CD8-positive, alpha-beta T cell (primary cell): ENCODE measurements at regions of chr3 and their contacts with region 1.

Region 1: GRCh38 chr3:158727206-158728060 is 4.8 kb downstream of the RARRES1 start:
- DNase-seq: peak in 8 of 9 experiments; percentile 15 to 73 (median 44)
- ATAC-seq: peak; percentile 78
- H3K4me3 ChIP-seq: peak overlapping the region in 1 of 2 experiments; percentile 11
- H3K4me3 Mint-ChIP-seq: peak overlapping the region; percentile 52
- H3K27ac ChIP-seq: no peak overlapping the region
- H3K27ac Mint-ChIP-seq: peak overlapping the region; percentile 14
- H3K4me1 ChIP-seq: peaks cover 22% of the 10 kb centered on the region
- H3K4me1 Mint-ChIP-seq: peaks cover 32% of the 10 kb centered on the region
- H3K27me3 ChIP-seq: peaks cover 0 to 4% of the 10 kb centered on the region in 2 experiments
- H3K27me3 Mint-ChIP-seq: peaks cover 7% of the 10 kb centered on the region
- CTCF ChIP-seq: peak; percentile 67

Region 2: GRCh38 chr3:158560979-158561378 is 166.5 kb before region 1 on chr3:
- CTCF ChIA-PET with region 1: no interaction called
- POLR2A ChIA-PET with region 1: no interaction called
- intact Hi-C with region 1: no loop called
- DNase-seq: no peak
- ATAC-seq: no peak
- H3K4me3 ChIP-seq: no peak overlapping the region
- H3K4me3 Mint-ChIP-seq: no peak overlapping the region
- H3K27ac ChIP-seq: no peak overlapping the region
- H3K27ac Mint-ChIP-seq: no peak overlapping the region
- H3K4me1 ChIP-seq: no peaks in the 10 kb centered on the region
- H3K4me1 Mint-ChIP-seq: no peaks in the 10 kb centered on the region
- H3K27me3 ChIP-seq: no peaks in the 10 kb centered on the region
- H3K27me3 Mint-ChIP-seq: peaks cover 32% of the 10 kb centered on the region
- CTCF ChIP-seq: no peak

Region 3: DNA sequence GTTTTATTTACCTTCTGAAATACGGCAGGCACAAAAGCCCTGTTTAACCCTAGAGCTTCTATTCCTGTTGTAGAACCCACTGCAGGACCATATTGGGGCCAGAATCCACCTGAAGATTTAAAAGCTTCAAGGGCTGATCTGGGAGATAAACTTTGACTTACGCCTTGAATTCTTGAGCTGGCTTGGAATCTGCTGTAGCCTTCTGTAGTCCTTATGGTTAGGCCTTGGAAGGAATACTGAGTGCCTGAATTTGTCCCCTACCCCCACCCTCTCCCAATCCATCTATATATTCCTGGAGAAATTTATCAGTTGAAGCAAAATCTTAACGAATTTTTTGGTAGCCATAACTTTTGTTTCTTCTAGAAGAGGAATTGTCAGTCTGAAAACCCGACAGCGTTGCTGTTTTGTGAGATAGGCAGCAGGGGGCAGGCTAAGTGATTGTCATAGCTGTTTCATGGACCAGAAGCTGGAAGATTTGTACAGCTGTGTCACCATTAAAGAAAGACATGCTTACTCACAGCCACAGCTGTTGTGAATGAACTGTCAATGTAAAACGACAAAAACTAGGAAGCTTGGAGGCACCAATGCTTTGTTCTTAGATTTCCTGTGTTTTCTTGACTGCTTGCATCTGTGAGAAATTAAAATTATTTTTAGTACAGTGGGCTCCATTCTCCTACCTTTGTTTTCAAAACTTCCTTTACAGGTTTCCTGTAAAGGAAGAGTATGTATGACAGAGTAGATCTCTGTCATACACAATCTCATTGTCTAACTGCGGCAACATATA is 67.8 kb before region 1 on chr3:
- CTCF ChIA-PET with region 1: interaction called, 14 read pairs
- POLR2A ChIA-PET with region 1: no interaction called
- intact Hi-C with region 1: no loop called
- DNase-seq: peak in 6 of 9 experiments; percentile 16 to 60 (median 50)
- ATAC-seq: peak; percentile 83
- H3K4me3 ChIP-seq: no peak overlapping the region
- H3K4me3 Mint-ChIP-seq: no peak overlapping the region
- H3K27ac ChIP-seq: no peak overlapping the region
- H3K27ac Mint-ChIP-seq: no peak overlapping the region
- H3K4me1 ChIP-seq: no peaks in the 10 kb centered on the region
- H3K4me1 Mint-ChIP-seq: peaks cover 5% of the 10 kb centered on the region
- H3K27me3 ChIP-seq: no peaks in the 10 kb centered on the region
- H3K27me3 Mint-ChIP-seq: no peaks in the 10 kb centered on the region
- CTCF ChIP-seq: peak; percentile 52

Region 4: DNA sequence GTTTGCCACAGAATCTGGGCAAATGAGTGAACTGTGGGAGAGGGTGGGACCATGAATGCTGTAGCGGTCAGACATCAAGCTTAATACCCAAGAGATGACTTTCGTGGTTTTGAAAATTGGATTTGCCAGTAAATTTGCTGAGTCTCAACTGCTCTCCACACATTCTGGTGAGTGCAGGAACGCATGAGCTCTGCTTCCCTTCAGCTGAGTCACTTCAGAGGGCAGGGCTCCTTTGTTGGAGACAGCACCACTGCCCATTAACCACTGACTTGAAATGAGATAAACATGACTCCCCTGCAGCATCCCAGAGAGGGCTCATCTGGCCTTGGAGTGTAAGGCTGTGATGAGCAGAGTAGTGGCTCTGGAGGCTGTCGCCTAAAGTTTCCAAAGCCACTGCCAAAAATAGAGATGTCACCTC is 17.8 kb before region 1 on chr3:
- CTCF ChIA-PET with region 1: interaction called, 12 read pairs
- POLR2A ChIA-PET with region 1: interaction called, 3 read pairs
- intact Hi-C with region 1: no loop called
- DNase-seq: no peak
- ATAC-seq: no peak
- H3K4me3 ChIP-seq: no peak overlapping the region
- H3K4me3 Mint-ChIP-seq: no peak overlapping the region
- H3K27ac ChIP-seq: no peak overlapping the region
- H3K27ac Mint-ChIP-seq: no peak overlapping the region
- H3K4me1 ChIP-seq: no peaks in the 10 kb centered on the region
- H3K4me1 Mint-ChIP-seq: no peaks in the 10 kb centered on the region
- H3K27me3 ChIP-seq: no peaks in the 10 kb centered on the region
- H3K27me3 Mint-ChIP-seq: no peaks in the 10 kb centered on the region
- CTCF ChIP-seq: no peak

Region 5: GRCh38 chr3:158742871-158743663 is 15.6 kb after region 1 on chr3:
- CTCF ChIA-PET with region 1: interaction called, 41 read pairs
- POLR2A ChIA-PET with region 1: no interaction called
- intact Hi-C with region 1: no loop called
- DNase-seq: no peak
- ATAC-seq: no peak
- H3K4me3 ChIP-seq: no peak overlapping the region
- H3K4me3 Mint-ChIP-seq: no peak overlapping the region
- H3K27ac ChIP-seq: no peak overlapping the region
- H3K27ac Mint-ChIP-seq: no peak overlapping the region
- H3K4me1 ChIP-seq: peaks cover 6% of the 10 kb centered on the region
- H3K4me1 Mint-ChIP-seq: peaks cover 11% of the 10 kb centered on the region
- H3K27me3 ChIP-seq: no peaks in the 10 kb centered on the region
- H3K27me3 Mint-ChIP-seq: no peaks in the 10 kb centered on the region
- CTCF ChIP-seq: no peak

Region 6: DNA sequence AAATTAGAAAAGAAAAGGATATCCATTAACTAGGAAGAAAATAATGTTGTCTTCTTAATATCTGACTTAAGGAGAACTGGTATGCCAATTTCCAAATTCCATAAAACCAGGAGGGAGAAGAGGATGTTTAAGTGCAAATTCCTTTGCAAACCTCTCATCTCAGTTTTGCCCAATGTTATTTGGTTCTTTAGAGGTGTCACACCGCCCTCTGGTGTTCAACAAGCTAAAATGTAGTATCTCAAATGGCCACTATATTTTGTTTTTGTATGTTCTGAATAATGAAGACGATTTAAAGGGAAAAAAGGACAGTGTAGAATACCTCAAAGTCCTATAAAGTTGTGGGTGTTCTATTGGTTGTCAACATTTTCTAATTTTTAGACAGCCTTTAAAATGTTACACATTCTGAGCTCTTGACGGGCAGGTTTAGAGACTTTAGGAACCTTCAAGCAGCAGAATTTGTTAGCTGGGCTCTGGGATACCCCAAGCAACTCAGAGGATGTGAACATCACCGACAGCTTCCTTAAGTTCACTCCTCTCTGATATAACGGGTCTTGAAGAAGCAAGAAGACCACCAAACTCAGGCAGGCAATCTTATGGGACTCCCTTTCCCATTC is 532.7 kb after region 1 on chr3:
- CTCF ChIA-PET with region 1: interaction called, 3 read pairs
- POLR2A ChIA-PET with region 1: no interaction called
- intact Hi-C with region 1: loop called in 1 of 2 experiments (anchors 5 kb)
- DNase-seq: peak in 4 of 9 experiments; percentile 9 to 56 (median 26)
- ATAC-seq: no peak
- H3K4me3 ChIP-seq: no peak overlapping the region
- H3K4me3 Mint-ChIP-seq: no peak overlapping the region
- H3K27ac ChIP-seq: no peak overlapping the region
- H3K27ac Mint-ChIP-seq: no peak overlapping the region
- H3K4me1 ChIP-seq: no peaks in the 10 kb centered on the region
- H3K4me1 Mint-ChIP-seq: no peaks in the 10 kb centered on the region
- H3K27me3 ChIP-seq: no peaks in the 10 kb centered on the region
- H3K27me3 Mint-ChIP-seq: peaks cover 7% of the 10 kb centered on the region
- CTCF ChIP-seq: peak; percentile 59

Region 7: GRCh38 chr3:159872374-159873109 is 1145.1 kb after region 1 on chr3:
- CTCF ChIA-PET with region 1: no interaction called
- POLR2A ChIA-PET with region 1: no interaction called
- intact Hi-C with region 1: no loop called
- DNase-seq: no peak
- ATAC-seq: no peak
- H3K4me3 ChIP-seq: no peak overlapping the region
- H3K4me3 Mint-ChIP-seq: no peak overlapping the region
- H3K27ac ChIP-seq: no peak overlapping the region
- H3K27ac Mint-ChIP-seq: no peak overlapping the region
- H3K4me1 ChIP-seq: no peaks in the 10 kb centered on the region
- H3K4me1 Mint-ChIP-seq: no peaks in the 10 kb centered on the region
- H3K27me3 ChIP-seq: no peaks in the 10 kb centered on the region
- H3K27me3 Mint-ChIP-seq: peaks cover 4% of the 10 kb centered on the region
- CTCF ChIP-seq: no peak